Body of pancreas (tissue), 4 donors: ENCODE measurements at regions of chr17 and their contacts with region 1.

Region 1: DNA sequence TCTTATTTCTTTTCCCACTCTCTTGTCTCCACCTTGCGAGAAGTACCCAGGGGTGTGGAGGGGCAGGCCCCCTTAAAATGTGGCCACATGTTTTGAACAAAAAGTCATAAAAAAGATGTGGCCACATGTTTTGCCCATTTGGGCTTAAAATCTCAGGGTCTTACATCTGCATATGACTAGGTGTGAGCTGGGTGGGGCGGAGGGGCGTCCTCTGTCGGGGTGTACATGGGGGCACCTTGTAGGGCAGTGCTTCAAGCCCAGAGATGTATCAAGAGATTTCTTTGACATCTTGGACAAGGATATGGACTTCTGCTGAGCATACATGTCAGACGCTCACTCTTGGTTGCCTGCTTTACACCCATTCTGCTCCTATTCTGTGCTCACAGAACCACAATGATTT is 13.0 kb upstream of the SLC47A1 start:
- DNase-seq: no peak
- ATAC-seq: no peak
- H3K4me3 ChIP-seq: no peak overlapping the region
- H3K27ac ChIP-seq: no peak overlapping the region
- H3K4me1 ChIP-seq: no peaks in the 10 kb centered on the region
- H3K27me3 ChIP-seq: no peaks in the 10 kb centered on the region
- CTCF ChIP-seq: no peak
- POLR2A ChIP-seq: no peak

Region 2: GRCh38 chr17:19361296-19361695 is 159.3 kb before region 1 on chr17:
- intact Hi-C with region 1: no loop called
- DNase-seq: no peak
- ATAC-seq: no peak
- H3K4me3 ChIP-seq: no peak overlapping the region
- H3K27ac ChIP-seq: no peak overlapping the region
- H3K4me1 ChIP-seq: peaks cover 26% of the 10 kb centered on the region
- H3K27me3 ChIP-seq: no peaks in the 10 kb centered on the region
- CTCF ChIP-seq: no peak
- POLR2A ChIP-seq: no peak

Region 3: DNA sequence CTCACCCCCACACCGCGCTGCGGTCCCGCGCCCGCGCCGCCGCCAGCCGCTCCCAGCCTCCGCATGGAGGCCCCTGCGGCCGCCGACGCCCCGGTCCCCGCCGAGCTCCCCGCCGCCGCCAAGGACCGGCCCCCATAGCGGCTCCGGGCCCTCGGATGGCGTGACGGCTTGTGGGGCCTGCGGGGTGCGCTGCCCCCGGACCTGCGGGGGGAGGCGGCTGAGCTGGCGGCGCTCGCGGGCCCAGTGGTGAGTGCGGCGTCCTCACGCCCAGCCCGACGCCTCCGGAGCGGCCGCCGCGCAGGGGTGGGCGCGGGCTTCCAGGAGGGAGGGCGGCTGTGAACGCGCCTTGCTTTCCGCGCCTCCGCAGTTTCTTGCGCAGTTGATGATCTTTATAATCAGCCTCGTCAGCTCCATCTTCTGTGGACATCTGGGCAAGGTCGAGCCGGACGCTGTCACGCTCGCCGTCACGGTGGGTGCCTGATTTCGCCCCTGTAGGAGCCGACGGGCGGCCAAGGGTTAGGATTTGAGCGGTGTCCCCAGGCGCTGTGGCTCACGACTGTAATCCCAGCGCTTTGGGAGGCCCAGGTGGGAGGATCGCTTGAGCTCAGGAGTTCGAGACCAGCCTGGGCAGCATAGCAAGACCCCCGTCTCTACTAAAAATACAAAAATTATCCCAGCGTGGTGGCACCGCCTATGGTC is 59.4 kb after region 1 on chr17:
- intact Hi-C with region 1: no loop called
- DNase-seq: peak in 1 of 4 donors; percentile 12
- ATAC-seq: no peak
- H3K4me3 ChIP-seq: no peak overlapping the region
- H3K27ac ChIP-seq: no peak overlapping the region
- H3K4me1 ChIP-seq: peaks cover 4% of the 10 kb centered on the region
- H3K27me3 ChIP-seq: peaks cover 3 to 8% of the 10 kb centered on the region in 2 donors
- CTCF ChIP-seq: no peak
- POLR2A ChIP-seq: no peak

Region 4: DNA sequence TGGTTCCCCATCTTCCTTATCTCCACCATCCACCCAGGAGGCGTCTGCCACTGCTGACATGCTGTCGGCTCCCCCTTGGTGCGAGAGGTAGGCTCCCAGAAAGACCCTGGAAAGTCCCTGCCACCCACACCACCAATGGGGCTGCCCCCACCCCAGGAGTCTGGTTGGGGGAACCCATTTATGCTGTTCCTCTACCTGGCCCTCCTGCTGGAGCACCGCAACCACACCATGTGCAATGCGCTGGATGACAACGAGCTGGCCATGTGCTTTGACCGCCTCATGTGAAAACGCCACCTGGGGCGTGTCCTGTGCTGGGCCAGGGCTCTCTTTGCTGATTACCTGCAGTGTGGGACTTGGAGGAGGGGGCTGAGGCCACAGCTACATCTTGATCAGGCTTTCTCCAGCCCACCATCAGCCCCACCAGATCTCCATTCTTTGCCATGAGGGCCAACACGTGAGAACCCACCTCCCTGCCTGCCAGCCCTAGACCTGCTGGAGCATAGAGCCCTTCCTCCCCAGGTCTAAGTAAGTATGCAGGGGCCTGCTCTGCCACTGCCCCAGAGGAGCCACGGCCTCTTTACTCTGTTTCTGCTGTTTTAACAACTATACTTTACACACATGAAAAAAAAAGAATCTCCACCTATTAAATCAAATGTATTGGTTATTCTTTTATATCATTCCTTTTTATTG is 235.3 kb after region 1 on chr17:
- intact Hi-C with region 1: loop called (anchors 5 kb)
- DNase-seq: no peak
- ATAC-seq: no peak
- H3K4me3 ChIP-seq: no peak overlapping the region
- H3K27ac ChIP-seq: no peak overlapping the region
- H3K4me1 ChIP-seq: no peaks in the 10 kb centered on the region
- H3K27me3 ChIP-seq: no peaks in the 10 kb centered on the region
- CTCF ChIP-seq: no peak
- POLR2A ChIP-seq: no peak